ENCODE measurements at regions of chr2 and their contacts with region 1.

Region 1: DNA sequence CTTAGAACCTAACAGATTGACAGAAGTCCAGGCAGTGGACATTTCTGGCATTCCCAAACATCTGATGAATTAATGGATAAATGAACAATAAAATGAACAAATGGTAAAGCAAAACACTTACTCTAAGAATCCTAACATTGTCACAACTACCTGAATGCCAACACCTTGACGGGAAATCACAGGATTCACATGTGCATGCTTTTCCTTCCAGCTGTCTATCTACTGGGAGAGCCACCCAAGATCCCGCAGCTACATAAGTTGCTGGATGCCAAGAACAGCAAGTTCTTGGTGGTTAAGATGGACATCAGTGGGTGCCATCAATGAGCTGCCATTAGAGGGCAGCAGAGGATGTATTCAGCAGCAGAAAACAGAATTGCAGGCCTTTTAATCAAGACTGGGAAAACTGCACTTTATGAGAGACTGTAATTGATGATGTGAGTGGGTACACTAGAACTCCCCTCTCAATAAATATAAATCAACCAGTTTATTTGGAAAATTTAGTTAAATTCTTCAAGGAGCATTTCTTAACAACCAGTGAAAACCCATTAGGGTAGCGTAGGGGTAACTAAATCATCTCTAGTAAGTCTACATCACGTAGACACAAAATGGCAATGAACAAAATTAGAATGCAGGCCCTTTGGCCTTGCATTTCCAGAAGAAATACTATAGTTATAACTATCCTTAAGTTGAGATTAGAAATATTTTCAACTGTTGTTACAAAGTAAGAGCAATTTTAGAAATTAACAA is 45.6 kb downstream of the SESTD1 start:
- DNase-seq: peak; percentile 2 to 74 (median 42)
- ATAC-seq: peak; percentile 36
- H3K4me3 ChIP-seq: no peak overlapping the region
- H3K4me3 Mint-ChIP-seq: no peak overlapping the region
- H3K27ac ChIP-seq: no peak overlapping the region
- H3K27ac Mint-ChIP-seq: no peak overlapping the region
- H3K4me1 ChIP-seq: no peaks in the 10 kb centered on the region
- H3K4me1 Mint-ChIP-seq: no peaks in the 10 kb centered on the region
- H3K27me3 ChIP-seq: no peaks in the 10 kb centered on the region
- H3K27me3 Mint-ChIP-seq: no peaks in the 10 kb centered on the region
- CTCF ChIP-seq: peak; percentile 82

Region 2: GRCh38 chr2:179264368-179265081 is 45.5 kb after region 1 on chr2 and contains the start of gene SESTD1:
- CTCF ChIA-PET with region 1: interaction called, 3 read pairs
- POLR2A ChIA-PET with region 1: no interaction called
- intact Hi-C with region 1: loop called in 1 of 2 experiments (anchors 1 kb)
- DNase-seq: peak in 8 of 9 experiments; percentile 20 to 71 (median 44)
- ATAC-seq: peak; percentile 79
- H3K4me3 ChIP-seq: peak within 1 kb of the TSS; percentile 47 to 61
- H3K4me3 Mint-ChIP-seq: peak within 1 kb of the TSS; percentile 82
- H3K27ac ChIP-seq: no peak within 1 kb of the TSS
- H3K27ac Mint-ChIP-seq: no peak within 1 kb of the TSS
- H3K4me1 ChIP-seq: peaks cover 10% of the 10 kb centered on the region
- H3K4me1 Mint-ChIP-seq: peaks cover 16% of the 10 kb centered on the region
- H3K27me3 ChIP-seq: peaks cover 0 to 6% of the 10 kb centered on the region in 2 experiments
- H3K27me3 Mint-ChIP-seq: peaks cover 34% of the 10 kb centered on the region
- CTCF ChIP-seq: no peak
- total RNA-seq, gene SESTD1: 3.6 to 5.4 TPM

Region 3: DNA sequence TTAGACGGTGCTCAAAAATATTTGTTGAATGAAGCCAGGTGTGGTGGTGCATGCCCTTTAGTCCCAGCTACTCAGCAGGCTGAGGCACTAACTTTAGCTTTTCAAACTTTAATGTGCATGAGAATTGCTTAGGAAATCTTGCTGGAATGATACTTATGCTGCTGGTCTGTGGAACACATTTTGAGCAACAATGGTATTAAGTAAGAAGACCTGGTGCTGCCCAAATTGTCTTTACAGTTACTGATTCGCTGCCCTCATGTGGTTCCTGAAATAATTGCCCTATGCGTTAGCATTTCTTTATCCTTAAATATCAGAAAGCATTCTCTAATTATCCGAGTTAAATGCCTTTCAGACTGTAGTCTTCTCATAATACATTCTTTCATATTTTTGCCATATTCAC is 121.6 kb after region 1 on chr2:
- CTCF ChIA-PET with region 1: no interaction called
- POLR2A ChIA-PET with region 1: no interaction called
- intact Hi-C with region 1: loop called (anchors 1 kb)
- DNase-seq: peak in 1 of 9 experiments; percentile 21
- ATAC-seq: no peak
- H3K4me3 ChIP-seq: no peak overlapping the region
- H3K4me3 Mint-ChIP-seq: no peak overlapping the region
- H3K27ac ChIP-seq: no peak overlapping the region
- H3K27ac Mint-ChIP-seq: no peak overlapping the region
- H3K4me1 ChIP-seq: no peaks in the 10 kb centered on the region
- H3K4me1 Mint-ChIP-seq: no peaks in the 10 kb centered on the region
- H3K27me3 ChIP-seq: no peaks in the 10 kb centered on the region
- H3K27me3 Mint-ChIP-seq: no peaks in the 10 kb centered on the region
- CTCF ChIP-seq: no peak